ENCODE measurements at regions of chr15 and their contacts with region 1.

Region 1: GRCh38 chr15:44711356-44712107 is at the start of gene B2M:
- DNase-seq: peak; percentile 87 to 99 (median 96)
- ATAC-seq: peak; percentile 70 to 81
- H3K4me3 Mint-ChIP-seq: peak within 1 kb of the TSS; percentile 88 to 100 (median 98)
- H3K27ac Mint-ChIP-seq: peak within 1 kb of the TSS; percentile 100
- H3K4me1 Mint-ChIP-seq: peaks cover 33 to 69% (median 54%) of the 10 kb centered on the region in 4 donors
- H3K27me3 Mint-ChIP-seq: peaks cover 0 to 4% (median 0%) of the 10 kb centered on the region in 5 donors
- polyA plus RNA-seq, gene B2M: 25,152 to 39,550 (median 31,716) TPM

Region 2: GRCh38 chr15:44698641-44699040 is 12.9 kb before region 1 on chr15:
- POLR2A ChIA-PET with region 1: interaction called, 707 read pairs
- DNase-seq: no peak
- ATAC-seq: no peak
- H3K4me3 Mint-ChIP-seq: no peak overlapping the region
- H3K27ac Mint-ChIP-seq: peak overlapping the region in 4 of 10 donors; percentile 30 to 45 (median 34)
- H3K4me1 Mint-ChIP-seq: peaks cover 17 to 34% (median 29%) of the 10 kb centered on the region in 4 donors
- H3K27me3 Mint-ChIP-seq: no peaks in the 10 kb centered on the region

Region 3: GRCh38 chr15:44728576-44729407 is 17.3 kb after region 1 on chr15:
- POLR2A ChIA-PET with region 1: interaction called, 1,743 read pairs
- DNase-seq: peak; percentile 80 to 97 (median 96)
- ATAC-seq: peak; percentile 78 to 85
- H3K4me3 Mint-ChIP-seq: peak overlapping the region; percentile 97 to 100 (median 99)
- H3K27ac Mint-ChIP-seq: peak overlapping the region; percentile 98 to 100 (median 99)
- H3K4me1 Mint-ChIP-seq: peaks cover 29 to 83% (median 72%) of the 10 kb centered on the region in 4 donors
- H3K27me3 Mint-ChIP-seq: no peaks in the 10 kb centered on the region

Region 4: GRCh38 chr15:44882499-44882968 is 171.0 kb after region 1 on chr15:
- POLR2A ChIA-PET with region 1: no interaction called
- DNase-seq: no peak
- ATAC-seq: no peak
- H3K4me3 Mint-ChIP-seq: no peak overlapping the region
- H3K27ac Mint-ChIP-seq: no peak overlapping the region
- H3K4me1 Mint-ChIP-seq: no peaks in the 10 kb centered on the region
- H3K27me3 Mint-ChIP-seq: peaks cover 0 to 6% (median 2%) of the 10 kb centered on the region in 5 donors

Measured in naive thymus-derived CD8-positive, alpha-beta T cell (primary cell).